Right cardiac atrium (tissue), 5 donors: ENCODE measurements at regions of chr2 and their contacts with region 1.

Region 1: DNA sequence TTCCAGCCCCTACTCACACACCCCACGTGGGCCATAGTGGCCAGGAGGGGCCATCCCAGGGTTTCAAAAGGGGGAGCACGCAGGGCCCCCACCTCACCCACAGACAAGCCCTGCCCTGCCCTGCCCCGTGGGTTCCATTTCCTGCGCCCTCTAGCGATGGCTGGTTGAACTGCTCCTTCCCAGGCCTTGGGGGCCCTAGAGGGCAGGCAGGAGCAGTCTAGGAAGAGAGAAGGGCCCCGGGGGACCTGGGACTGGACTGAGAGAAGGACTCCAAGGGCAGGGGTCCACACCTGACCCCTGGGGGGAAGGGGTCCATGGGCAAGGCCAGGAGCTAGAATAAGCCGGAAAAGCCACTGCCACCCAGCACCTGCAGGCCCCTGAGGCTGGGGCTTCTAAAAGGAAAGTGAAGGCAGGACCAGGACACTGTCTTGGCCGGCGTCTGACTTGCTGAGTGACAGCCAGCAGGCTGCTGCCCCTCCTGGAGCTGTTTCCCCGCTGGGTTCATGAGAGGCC is 10.1 kb downstream of the CYP26B1 start:
- DNase-seq: peak; percentile 65 to 86 (median 85)
- ATAC-seq: peak; percentile 53 to 60
- H3K4me3 ChIP-seq: no peak overlapping the region
- H3K27ac ChIP-seq: no peak overlapping the region
- H3K4me1 ChIP-seq: no peaks in the 10 kb centered on the region
- H3K27me3 ChIP-seq: no peaks in the 10 kb centered on the region

Region 2: GRCh38 chr2:71933467-71934319 is 203.9 kb before region 1 on chr2:
- intact Hi-C with region 1: loop called in 2 of 4 experiments (anchors 5 to 10 kb)
- DNase-seq: peak in 1 of 3 donors; percentile 50
- ATAC-seq: no peak
- H3K4me3 ChIP-seq: no peak overlapping the region
- H3K27ac ChIP-seq: peak overlapping the region; percentile 39
- H3K4me1 ChIP-seq: peaks cover 2% of the 10 kb centered on the region
- H3K27me3 ChIP-seq: no peaks in the 10 kb centered on the region

Region 3: GRCh38 chr2:72012886-72013574 is 124.5 kb before region 1 on chr2:
- intact Hi-C with region 1: loop called in 1 of 4 experiments (anchors 10 kb)
- DNase-seq: no peak
- ATAC-seq: no peak
- H3K4me3 ChIP-seq: no peak overlapping the region
- H3K27ac ChIP-seq: no peak overlapping the region
- H3K4me1 ChIP-seq: no peaks in the 10 kb centered on the region
- H3K27me3 ChIP-seq: no peaks in the 10 kb centered on the region

Region 4: DNA sequence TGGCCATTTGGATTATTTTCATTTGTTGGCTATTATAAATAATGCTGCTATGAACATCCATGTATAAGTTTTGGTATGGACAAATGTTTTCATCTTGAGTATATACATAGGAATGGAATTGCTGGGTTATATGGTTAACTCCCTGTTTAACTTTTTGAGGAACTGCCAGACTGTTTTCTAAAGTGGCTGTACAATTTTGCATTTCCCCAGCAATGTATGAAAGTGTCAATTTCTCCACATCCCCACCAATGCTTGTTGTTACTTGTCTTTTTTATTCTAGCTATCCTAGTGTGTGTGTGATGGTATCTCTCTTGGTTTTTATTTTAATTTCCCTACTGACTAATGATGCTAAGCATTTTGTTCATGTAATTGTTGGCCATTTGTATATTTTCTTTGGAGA is 100.8 kb after region 1 on chr2:
- intact Hi-C with region 1: no loop called
- DNase-seq: no peak
- ATAC-seq: no peak
- H3K4me3 ChIP-seq: no peak overlapping the region
- H3K27ac ChIP-seq: no peak overlapping the region
- H3K4me1 ChIP-seq: peaks cover 2% of the 10 kb centered on the region
- H3K27me3 ChIP-seq: no peaks in the 10 kb centered on the region